Panc1 (cell line): ENCODE measurements at regions of chr15 and their contacts with region 1.

Region 1: GRCh38 chr15:86255247-86255646 is 175.6 kb downstream of the AGBL1 start:
- DNase-seq: no peak
- ATAC-seq: no peak
- H3K4me3 ChIP-seq: no peak overlapping the region
- H3K27ac ChIP-seq: no peak overlapping the region
- H3K4me1 ChIP-seq: no peaks in the 10 kb centered on the region
- H3K27me3 ChIP-seq: no peaks in the 10 kb centered on the region
- CTCF ChIP-seq: no peak

Region 2: DNA sequence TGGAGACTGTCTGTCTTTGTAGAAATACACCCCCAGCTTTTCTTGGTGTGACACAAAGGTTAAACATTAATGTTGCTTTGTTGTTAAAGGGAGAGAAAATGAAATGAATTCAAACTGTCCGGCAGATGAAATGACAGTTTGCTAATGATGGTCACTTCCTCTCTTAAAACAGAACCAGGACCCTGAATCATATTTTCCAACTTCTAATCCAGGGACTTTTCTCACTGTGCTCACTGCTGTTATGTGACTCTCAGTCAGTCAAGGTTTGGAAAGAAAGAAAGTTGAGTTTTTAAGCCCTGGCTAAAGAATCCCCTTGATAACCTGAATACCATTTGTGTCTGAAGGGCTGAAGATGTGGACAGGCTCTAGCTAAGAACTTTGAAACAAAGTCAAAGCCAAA is 40.3 kb after region 1 on chr15:
- CTCF ChIA-PET with region 1: no interaction called
- POLR2A ChIA-PET with region 1: interaction called, 16 read pairs
- in situ Hi-C with region 1: no loop called
- intact Hi-C with region 1: no loop called
- DNase-seq: no peak
- ATAC-seq: no peak
- H3K4me3 ChIP-seq: no peak overlapping the region
- H3K27ac ChIP-seq: no peak overlapping the region
- H3K4me1 ChIP-seq: no peaks in the 10 kb centered on the region
- H3K27me3 ChIP-seq: no peaks in the 10 kb centered on the region
- CTCF ChIP-seq: no peak